ENCODE measurements at regions of chr5 and their contacts with region 1.

Region 1: DNA sequence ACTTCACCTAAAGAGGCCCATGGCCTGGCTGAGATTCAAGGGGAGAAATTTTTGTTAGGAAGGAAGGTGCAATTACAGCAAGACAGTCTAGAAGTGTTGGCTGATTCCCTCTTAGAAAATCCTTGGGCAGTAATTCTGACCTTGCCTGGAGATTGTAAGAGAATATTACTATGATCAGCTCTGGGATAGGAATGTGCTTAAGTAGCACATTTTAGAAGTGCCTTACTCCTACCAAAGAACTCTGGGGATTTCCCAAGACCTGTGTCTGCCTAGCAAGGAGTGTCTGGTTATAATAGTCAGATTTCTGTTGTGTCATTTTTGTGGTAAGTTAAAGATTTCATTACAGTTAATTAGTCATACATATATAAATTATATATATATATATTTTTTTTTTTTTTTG is 52.3 kb downstream of the NLN start:
- DNase-seq: no peak
- H3K4me3 ChIP-seq: no peak overlapping the region
- H3K27ac ChIP-seq: no peak overlapping the region
- H3K4me1 ChIP-seq: no peaks in the 10 kb centered on the region
- H3K27me3 ChIP-seq: no peaks in the 10 kb centered on the region
- CTCF ChIP-seq: no peak
- EP300 ChIP-seq: no peak
- POLR2A ChIP-seq: no peak

Region 2: GRCh38 chr5:65938256-65938655 is 163.9 kb after region 1 on chr5:
- in situ Hi-C with region 1: loop called in 1 of 4 experiments (anchors 10 kb)
- intact Hi-C with region 1: no loop called
- DNase-seq: no peak
- H3K4me3 ChIP-seq: no peak overlapping the region
- H3K27ac ChIP-seq: no peak overlapping the region
- H3K4me1 ChIP-seq: peaks cover 0 to 35% (median 8%) of the 10 kb centered on the region in 4 donors
- H3K27me3 ChIP-seq: no peaks in the 10 kb centered on the region
- CTCF ChIP-seq: no peak
- EP300 ChIP-seq: no peak
- POLR2A ChIP-seq: no peak

Region 3: DNA sequence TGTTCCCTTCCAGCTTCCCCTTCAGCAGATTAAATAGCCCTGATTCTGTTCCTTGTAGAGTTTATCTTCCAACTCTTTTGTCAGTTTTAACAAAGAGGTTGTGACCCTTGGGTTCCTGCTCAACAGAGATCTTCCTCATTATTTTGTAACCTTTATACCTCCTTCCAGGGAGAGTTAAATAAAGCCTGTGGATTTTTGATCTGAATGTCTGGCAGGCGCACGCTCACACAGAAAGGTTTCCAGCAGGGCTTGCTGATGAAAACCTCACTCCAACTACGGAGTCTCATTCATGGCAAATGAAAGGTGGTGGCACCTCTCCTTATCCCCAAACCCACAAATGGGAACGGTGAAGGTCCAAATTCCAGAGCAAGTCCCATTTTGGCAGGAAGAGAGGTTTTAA is 498.8 kb after region 1 on chr5:
- in situ Hi-C with region 1: no loop called
- intact Hi-C with region 1: no loop called
- DNase-seq: no peak
- H3K4me3 ChIP-seq: no peak overlapping the region
- H3K27ac ChIP-seq: no peak overlapping the region
- H3K4me1 ChIP-seq: no peaks in the 10 kb centered on the region
- H3K27me3 ChIP-seq: no peaks in the 10 kb centered on the region
- CTCF ChIP-seq: no peak
- EP300 ChIP-seq: no peak
- POLR2A ChIP-seq: no peak